Activated CD4-positive, alpha-beta T cell treated with anti-CD3 and anti-CD28 coated beads, Interleukin-2, amount 10 ng/mL, durations not matched to agents 24 days and 14 days (primary cell): ENCODE measurements at regions of chr1 and their contacts with region 1.

Region 1: DNA sequence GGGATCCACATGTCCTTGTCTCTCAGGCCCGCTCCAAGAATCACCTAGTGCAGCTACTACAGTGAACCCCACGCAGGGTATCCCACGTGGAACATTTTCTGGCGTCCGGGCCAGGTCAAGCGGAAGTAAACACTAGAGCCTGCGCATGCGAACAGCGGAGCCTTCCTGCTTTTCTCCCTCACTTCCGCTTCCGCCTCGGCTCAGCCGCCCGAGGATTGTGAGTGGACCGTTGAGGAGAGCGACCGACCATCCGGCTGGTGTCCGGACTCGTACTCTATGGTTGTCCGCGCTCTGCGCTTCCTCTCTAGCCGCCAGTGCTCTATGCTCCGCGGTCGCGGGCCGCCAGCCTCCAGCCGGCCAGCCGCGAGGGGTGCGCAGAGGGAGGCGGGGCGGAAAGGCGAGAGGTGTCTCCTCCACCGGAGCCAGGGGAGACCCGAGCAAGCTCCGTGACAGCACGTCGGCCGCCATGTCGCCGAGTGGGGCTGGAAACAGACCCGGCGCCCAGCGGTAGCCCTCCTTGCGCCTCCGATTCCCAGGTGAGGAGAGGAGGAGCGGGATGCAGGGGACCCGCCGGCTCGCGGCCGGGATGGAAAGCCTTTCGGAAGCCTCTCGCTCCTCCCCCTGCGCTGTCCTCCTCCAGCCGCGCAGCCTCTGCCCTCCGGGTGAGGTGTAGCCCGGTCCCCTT is at the starts of genes CNST and TFB2M:
- DNase-seq: peak; percentile 98
- H3K4me3 Mint-ChIP-seq: peak within 1 kb of the TSS; percentile 100
- H3K27ac Mint-ChIP-seq: peak within 1 kb of the TSS; percentile 99
- H3K4me1 Mint-ChIP-seq: peaks cover 35% of the 10 kb centered on the region
- H3K27me3 Mint-ChIP-seq: no peaks in the 10 kb centered on the region
- total RNA-seq, gene CNST: 26.4 and 28.5 TPM in 2 replicates
- total RNA-seq, gene TFB2M: 24.3 and 26.5 TPM in 2 replicates

Region 2: DNA sequence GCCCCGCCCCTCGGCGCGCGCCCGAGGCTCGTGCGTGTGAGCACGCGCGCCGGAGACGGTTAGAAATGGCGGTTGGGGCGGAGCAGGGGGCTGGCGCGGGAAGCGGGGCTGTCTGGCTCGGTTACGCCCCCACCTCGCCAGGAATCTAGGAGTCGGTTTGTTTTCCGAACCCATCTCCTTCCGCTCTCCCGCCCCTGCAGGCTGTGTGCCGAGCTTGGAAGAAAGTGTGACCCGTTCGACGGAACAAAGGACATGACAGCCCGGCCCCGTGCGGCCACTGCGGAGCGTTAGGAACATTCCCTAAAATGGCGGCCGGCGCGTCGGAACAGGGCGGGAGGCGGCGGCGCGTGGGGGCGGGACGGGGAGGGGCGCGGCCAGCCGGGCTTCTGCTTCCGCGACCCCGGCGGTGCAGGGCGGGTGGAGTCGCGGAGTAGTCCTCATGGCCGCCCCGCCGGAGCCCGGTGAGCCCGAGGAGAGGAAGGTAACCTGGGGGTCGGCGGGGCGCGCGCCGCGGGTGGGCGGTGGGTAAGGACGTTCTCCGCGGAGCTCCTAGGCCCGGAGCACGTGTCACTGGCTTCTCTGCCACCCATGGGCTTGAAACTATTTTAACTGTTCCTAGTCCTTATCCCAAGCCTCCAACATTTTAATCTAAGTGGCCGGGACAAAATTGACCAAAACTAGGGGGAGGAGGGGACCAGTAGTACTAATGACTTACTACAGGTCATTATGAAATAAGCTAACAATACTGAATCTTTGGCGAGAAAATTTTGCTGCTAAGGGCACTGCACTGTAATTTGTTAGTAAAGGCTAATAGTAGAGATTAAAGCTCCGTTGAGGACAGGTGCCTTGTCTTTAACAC is 1730.8 kb before region 1 on chr1 and contains the start of gene COX20:
- intact Hi-C with region 1: loop called (anchors 1 kb)
- DNase-seq: peak; percentile 97
- H3K4me3 Mint-ChIP-seq: peak within 1 kb of the TSS; percentile 91
- H3K27ac Mint-ChIP-seq: peak within 1 kb of the TSS; percentile 99
- H3K4me1 Mint-ChIP-seq: peaks cover 43% of the 10 kb centered on the region
- H3K27me3 Mint-ChIP-seq: no peaks in the 10 kb centered on the region
- total RNA-seq, gene COX20: 28.6 and 30.0 TPM in 2 replicates

Region 3: GRCh38 chr1:246329900-246330299 is 236.4 kb before region 1 on chr1:
- intact Hi-C with region 1: loop called (anchors 2 kb)
- DNase-seq: peak; percentile 82
- H3K4me3 Mint-ChIP-seq: peak overlapping the region; percentile 36
- H3K27ac Mint-ChIP-seq: peak overlapping the region; percentile 73
- H3K4me1 Mint-ChIP-seq: peaks cover 39% of the 10 kb centered on the region
- H3K27me3 Mint-ChIP-seq: no peaks in the 10 kb centered on the region

Region 4: DNA sequence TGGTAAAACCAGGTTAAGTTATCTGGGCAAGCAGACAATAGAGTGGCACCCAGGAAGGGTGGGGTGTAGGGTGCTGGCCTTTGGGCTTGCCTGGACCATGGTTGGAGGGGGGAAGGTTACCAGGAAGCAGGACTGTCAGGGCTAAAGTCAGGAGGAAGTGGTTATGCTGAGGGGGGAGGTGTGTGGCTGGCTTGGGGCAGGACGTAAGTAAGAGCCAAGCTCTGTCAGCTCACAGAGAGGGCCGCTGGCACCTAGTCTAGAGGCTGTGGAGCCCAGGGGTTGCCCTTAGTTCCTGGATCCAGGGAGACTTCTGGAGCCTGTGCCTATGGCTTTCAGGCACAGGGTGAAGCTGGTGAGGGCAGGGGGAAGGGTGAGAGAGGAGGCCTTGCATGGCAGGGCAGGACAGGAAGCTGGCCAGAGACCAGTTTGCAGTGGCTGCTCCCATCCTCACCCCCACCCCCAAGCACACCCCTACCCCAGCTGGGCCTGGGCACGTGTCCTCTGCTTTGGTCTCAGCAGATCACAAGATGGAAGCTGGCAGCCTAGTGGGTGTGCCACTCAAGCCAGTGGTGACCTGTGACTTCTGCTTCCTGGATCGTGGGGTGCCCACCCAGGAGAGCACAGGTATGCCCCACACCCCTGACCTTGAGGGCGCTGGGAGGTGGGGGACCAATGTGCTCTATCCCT is 38.7 kb before region 1 on chr1:
- intact Hi-C with region 1: no loop called
- DNase-seq: no peak
- H3K4me3 Mint-ChIP-seq: no peak overlapping the region
- H3K27ac Mint-ChIP-seq: peak overlapping the region; percentile 70
- H3K4me1 Mint-ChIP-seq: peaks cover 8% of the 10 kb centered on the region
- H3K27me3 Mint-ChIP-seq: peaks cover 1% of the 10 kb centered on the region

Region 5: GRCh38 chr1:246583056-246583848 is 17.0 kb after region 1 on chr1:
- intact Hi-C with region 1: loop called (anchors 2 kb)
- DNase-seq: no peak
- H3K4me3 Mint-ChIP-seq: no peak overlapping the region
- H3K27ac Mint-ChIP-seq: peak overlapping the region; percentile 17
- H3K4me1 Mint-ChIP-seq: peaks cover 9% of the 10 kb centered on the region
- H3K27me3 Mint-ChIP-seq: no peaks in the 10 kb centered on the region

Region 6: GRCh38 chr1:246699095-246699735 is 132.9 kb after region 1 on chr1:
- intact Hi-C with region 1: loop called (anchors 2 kb)
- DNase-seq: peak; percentile 93
- H3K4me3 Mint-ChIP-seq: peak overlapping the region; percentile 22
- H3K27ac Mint-ChIP-seq: peak overlapping the region; percentile 32
- H3K4me1 Mint-ChIP-seq: peaks cover 8% of the 10 kb centered on the region
- H3K27me3 Mint-ChIP-seq: no peaks in the 10 kb centered on the region

Region 7: DNA sequence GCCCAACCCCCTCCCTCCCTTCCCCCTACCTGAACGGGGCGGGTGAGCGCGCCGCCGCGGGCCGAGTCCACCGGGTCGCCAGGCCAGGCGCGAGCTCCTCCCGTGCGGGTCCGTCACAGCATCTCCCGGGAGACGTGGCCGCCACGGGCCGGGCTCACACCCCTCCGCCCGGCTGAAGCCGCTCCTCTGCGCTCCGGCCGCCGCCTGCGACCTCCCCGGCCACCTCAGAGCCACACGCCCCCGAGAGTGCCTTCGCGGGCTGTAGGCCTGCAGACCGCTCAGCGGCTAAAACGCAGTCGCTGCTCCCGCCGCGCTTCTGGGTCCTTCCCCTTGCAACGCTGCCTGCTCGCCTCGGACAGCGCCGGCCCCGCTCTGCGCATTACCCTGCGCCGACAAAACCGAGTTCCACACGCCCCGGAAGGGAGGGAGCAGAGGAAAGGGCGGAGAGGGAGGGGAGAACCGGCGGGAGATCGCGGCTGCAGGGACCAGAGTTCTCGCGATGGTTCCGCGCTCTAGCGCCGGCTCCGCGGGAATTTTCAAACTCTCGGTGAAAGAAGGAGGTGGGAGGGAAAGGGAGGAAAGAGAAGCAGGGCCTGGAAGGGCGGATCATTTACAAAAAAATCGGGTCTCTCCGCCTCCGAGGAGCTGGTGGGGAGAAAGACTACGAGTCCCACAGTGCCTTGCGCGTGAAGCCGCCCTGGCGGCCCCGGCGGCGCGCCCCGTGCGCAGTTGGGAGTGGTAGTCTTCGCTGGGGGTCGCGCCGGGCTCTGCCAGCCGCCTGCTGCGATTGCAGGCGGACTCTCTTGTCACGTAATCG is 365.5 kb after region 1 on chr1 and contains the start of gene AHCTF1:
- intact Hi-C with region 1: loop called (anchors 1 kb)
- DNase-seq: peak; percentile 98
- H3K4me3 Mint-ChIP-seq: peak within 1 kb of the TSS; percentile 94
- H3K27ac Mint-ChIP-seq: peak within 1 kb of the TSS; percentile 96
- H3K4me1 Mint-ChIP-seq: peaks cover 22% of the 10 kb centered on the region
- H3K27me3 Mint-ChIP-seq: peaks cover 4% of the 10 kb centered on the region
- total RNA-seq, gene AHCTF1: 47.9 and 56.5 TPM in 2 replicates